Activated CD8-positive, alpha-beta T cell treated with anti-CD3 and anti-CD28 coated beads for 36 hours (primary cell): ENCODE measurements at regions of chr5 and their contacts with region 1.

Region 1: GRCh38 chr5:133423618-133424282 is 188.6 kb downstream of the FSTL4 start:
- DNase-seq: peak; percentile 78
- ATAC-seq: peak; percentile 94
- H3K4me3 Mint-ChIP-seq: no peak overlapping the region
- H3K27ac Mint-ChIP-seq: no peak overlapping the region
- H3K4me1 Mint-ChIP-seq: peaks cover 9% of the 10 kb centered on the region
- H3K27me3 Mint-ChIP-seq: peaks cover 14% of the 10 kb centered on the region
- CTCF ChIP-seq: peak; percentile 98

Region 2: GRCh38 chr5:133111299-133111698 is 312.5 kb before region 1 on chr5:
- CTCF ChIA-PET with region 1: interaction called, 15 read pairs
- POLR2A ChIA-PET with region 1: no interaction called
- intact Hi-C with region 1: no loop called
- DNase-seq: peak; percentile 88
- ATAC-seq: peak; percentile 76
- H3K4me3 Mint-ChIP-seq: no peak overlapping the region
- H3K27ac Mint-ChIP-seq: no peak overlapping the region
- H3K4me1 Mint-ChIP-seq: peaks cover 29% of the 10 kb centered on the region
- H3K27me3 Mint-ChIP-seq: no peaks in the 10 kb centered on the region
- CTCF ChIP-seq: peak; percentile 96

Region 3: GRCh38 chr5:133353741-133354140 is 70.0 kb before region 1 on chr5:
- CTCF ChIA-PET with region 1: no interaction called
- POLR2A ChIA-PET with region 1: no interaction called
- intact Hi-C with region 1: no loop called
- DNase-seq: no peak
- ATAC-seq: no peak
- H3K4me3 Mint-ChIP-seq: no peak overlapping the region
- H3K27ac Mint-ChIP-seq: no peak overlapping the region
- H3K4me1 Mint-ChIP-seq: peaks cover 3% of the 10 kb centered on the region
- H3K27me3 Mint-ChIP-seq: no peaks in the 10 kb centered on the region
- CTCF ChIP-seq: no peak

Region 4: DNA sequence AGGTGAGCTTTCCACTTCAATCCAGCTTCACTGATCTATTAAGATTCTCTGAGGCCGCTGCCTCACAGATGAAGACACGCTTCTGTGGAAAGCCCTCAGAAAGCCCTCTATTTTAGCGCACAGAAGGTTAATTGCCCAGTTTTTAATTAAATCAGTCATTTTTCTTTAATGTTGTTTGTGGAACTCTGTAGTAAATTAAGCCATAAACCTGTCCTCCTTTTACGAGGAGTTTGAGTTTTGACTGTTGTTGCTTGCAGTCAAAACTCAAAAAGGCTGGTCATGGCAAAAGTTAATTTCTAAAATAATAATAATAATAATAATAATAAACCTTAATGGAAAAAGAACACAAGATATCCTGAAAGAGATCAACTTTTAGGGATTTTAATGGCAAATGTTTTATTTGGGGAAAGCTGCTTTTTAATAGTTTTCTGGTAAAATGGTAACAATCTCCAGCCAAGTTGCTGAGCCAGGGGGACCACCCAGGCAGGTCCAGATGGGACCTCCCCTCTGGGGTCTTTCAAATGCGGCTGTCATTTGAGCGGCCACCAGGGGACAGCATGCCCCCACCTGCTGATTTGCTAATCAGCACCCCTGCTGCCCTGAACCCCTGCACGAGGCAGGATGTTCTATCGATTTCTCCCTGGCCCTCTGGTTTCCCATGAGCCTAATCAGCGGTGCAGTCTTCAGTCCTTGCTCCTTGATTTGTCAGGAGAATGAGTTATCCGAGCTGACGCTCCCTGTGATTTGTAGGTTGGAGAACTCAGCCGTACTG is 58.6 kb before region 1 on chr5:
- CTCF ChIA-PET with region 1: interaction called, 13 read pairs
- POLR2A ChIA-PET with region 1: no interaction called
- intact Hi-C with region 1: no loop called
- DNase-seq: peak; percentile 57
- ATAC-seq: no peak
- H3K4me3 Mint-ChIP-seq: no peak overlapping the region
- H3K27ac Mint-ChIP-seq: no peak overlapping the region
- H3K4me1 Mint-ChIP-seq: no peaks in the 10 kb centered on the region
- H3K27me3 Mint-ChIP-seq: peaks cover 2% of the 10 kb centered on the region
- CTCF ChIP-seq: peak; percentile 71

Region 5: DNA sequence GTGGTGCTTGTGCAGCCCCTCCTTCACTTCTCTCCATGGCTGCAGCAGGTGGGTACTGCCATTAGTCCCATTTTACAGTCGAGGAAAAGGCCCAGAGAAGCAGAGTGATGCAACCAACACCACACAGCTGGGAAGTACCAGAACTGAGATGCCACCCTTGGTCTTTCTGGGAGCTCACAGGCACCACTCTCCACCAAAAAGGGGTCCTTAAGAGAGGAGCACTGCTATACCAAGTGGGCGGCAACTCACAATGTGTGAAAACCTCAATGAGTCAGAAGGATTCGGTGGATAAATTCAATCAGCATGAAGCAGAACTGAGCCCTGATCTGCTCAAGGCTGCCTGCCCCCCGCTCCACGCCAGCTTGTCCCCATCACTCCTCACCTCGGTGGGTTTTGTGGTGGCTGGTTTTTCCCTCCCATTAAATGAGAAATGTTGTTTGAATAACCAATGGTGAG is 25.1 kb before region 1 on chr5:
- CTCF ChIA-PET with region 1: interaction called, 45 read pairs
- POLR2A ChIA-PET with region 1: interaction called, 3 read pairs
- intact Hi-C with region 1: no loop called
- DNase-seq: peak; percentile 91
- ATAC-seq: peak; percentile 95
- H3K4me3 Mint-ChIP-seq: no peak overlapping the region
- H3K27ac Mint-ChIP-seq: peak overlapping the region; percentile 63
- H3K4me1 Mint-ChIP-seq: peaks cover 39% of the 10 kb centered on the region
- H3K27me3 Mint-ChIP-seq: peaks cover 2% of the 10 kb centered on the region
- CTCF ChIP-seq: no peak

Region 6: DNA sequence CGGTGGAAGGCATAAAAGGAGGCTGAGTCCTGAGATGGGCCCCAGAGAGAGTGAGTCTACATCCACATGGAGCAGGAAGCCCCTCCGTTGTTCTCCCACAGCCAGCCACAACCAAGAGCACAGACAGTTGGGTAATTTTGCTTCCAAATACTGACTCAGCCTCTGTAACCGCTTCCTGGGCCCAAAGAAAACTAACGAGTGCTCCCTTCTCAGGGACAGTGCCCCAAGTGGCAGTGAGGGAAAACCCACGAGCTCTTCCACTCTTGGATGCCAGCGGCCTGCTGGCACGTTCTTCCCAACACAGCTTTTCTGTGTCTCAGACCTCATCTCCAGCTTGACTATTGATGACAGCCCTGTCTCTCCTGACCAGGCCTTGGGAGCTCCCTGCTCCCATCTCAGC is 19.0 kb before region 1 on chr5:
- CTCF ChIA-PET with region 1: interaction called, 52 read pairs
- POLR2A ChIA-PET with region 1: interaction called, 3 read pairs
- intact Hi-C with region 1: no loop called
- DNase-seq: peak; percentile 25
- ATAC-seq: no peak
- H3K4me3 Mint-ChIP-seq: no peak overlapping the region
- H3K27ac Mint-ChIP-seq: no peak overlapping the region
- H3K4me1 Mint-ChIP-seq: peaks cover 3% of the 10 kb centered on the region
- H3K27me3 Mint-ChIP-seq: peaks cover 2% of the 10 kb centered on the region
- CTCF ChIP-seq: no peak

Region 7: DNA sequence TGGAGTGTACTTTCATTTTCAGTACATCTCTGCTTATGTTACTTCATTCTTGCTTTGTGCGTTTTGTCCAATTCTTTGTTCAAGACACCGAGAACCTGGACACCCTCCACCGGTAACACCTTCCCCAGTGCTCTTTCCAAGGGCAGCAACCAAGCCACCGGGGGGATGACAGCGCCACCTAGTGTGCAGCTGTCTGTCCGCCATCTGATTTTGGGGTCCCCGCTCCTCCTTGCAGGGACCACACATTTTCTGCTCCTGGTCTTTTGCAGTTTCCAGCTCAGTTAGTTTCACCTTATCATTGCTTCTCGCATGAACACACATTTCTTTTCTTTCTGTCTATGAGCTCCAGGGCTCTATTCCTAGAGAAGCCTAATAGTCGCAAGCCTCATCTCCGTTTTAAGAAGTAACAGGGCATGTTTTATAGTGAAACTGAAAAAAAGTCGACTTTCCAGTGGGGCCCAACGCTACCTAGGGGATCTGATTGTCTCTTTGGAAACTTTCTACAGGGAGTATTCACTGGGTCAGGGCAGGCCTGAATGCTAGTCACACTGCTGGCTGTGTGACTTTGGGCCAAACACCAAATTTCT is 36.5 kb after region 1 on chr5:
- CTCF ChIA-PET with region 1: interaction called, 36 read pairs
- POLR2A ChIA-PET with region 1: no interaction called
- intact Hi-C with region 1: no loop called
- DNase-seq: peak; percentile 65
- ATAC-seq: peak; percentile 56
- H3K4me3 Mint-ChIP-seq: no peak overlapping the region
- H3K27ac Mint-ChIP-seq: no peak overlapping the region
- H3K4me1 Mint-ChIP-seq: no peaks in the 10 kb centered on the region
- H3K27me3 Mint-ChIP-seq: no peaks in the 10 kb centered on the region
- CTCF ChIP-seq: peak; percentile 85

Region 8: DNA sequence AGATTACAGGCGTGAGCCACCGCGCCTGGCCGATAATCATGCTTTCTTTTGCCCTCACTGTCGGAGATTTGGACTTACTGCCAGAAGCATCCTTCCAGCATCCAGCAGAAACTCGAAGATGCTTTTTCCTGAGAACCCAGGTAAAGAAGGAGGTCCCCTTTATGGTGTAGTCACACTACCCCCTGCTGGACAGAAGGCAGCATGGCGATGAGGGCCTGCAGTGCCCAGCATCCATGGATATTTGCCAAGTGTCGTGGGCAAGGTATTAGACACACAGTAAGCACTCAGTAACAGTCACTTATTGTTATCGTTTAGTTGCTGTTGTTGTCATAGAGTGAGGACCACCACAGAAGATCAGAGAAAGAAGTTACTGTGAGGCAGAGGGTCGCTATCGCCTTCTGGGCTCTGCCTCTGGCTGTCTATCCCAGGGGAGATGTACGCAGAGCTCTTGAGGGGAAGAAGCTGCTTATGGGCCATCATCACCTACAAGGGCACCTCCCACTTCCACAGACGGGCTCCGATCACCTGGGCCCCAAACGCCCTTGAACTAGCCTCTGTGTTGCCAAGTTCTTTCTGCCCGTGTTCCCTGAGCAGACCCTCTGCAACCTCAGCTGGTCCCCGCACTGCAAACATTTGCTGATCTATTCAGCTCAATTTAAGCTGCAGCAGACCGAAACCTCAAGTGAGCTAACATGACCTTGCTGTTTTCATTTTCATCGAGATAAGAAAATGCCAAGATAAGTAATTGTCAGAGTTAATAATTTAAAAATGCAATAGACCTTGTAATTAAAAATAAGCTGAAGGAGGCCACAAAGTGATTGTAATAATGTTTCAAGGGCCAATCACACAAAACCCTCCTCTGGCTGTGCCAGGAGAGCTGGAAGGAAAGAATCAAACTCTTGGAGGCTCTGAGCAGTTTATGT is 520.8 kb after region 1 on chr5:
- CTCF ChIA-PET with region 1: interaction called, 10 read pairs
- POLR2A ChIA-PET with region 1: no interaction called
- intact Hi-C with region 1: no loop called
- DNase-seq: peak; percentile 70
- ATAC-seq: peak; percentile 93
- H3K4me3 Mint-ChIP-seq: no peak overlapping the region
- H3K27ac Mint-ChIP-seq: no peak overlapping the region
- H3K4me1 Mint-ChIP-seq: peaks cover 3% of the 10 kb centered on the region
- H3K27me3 Mint-ChIP-seq: no peaks in the 10 kb centered on the region
- CTCF ChIP-seq: peak; percentile 74